MCF 10A (cell line): ENCODE measurements at regions of chr5 and their contacts with region 1.

Region 1: DNA sequence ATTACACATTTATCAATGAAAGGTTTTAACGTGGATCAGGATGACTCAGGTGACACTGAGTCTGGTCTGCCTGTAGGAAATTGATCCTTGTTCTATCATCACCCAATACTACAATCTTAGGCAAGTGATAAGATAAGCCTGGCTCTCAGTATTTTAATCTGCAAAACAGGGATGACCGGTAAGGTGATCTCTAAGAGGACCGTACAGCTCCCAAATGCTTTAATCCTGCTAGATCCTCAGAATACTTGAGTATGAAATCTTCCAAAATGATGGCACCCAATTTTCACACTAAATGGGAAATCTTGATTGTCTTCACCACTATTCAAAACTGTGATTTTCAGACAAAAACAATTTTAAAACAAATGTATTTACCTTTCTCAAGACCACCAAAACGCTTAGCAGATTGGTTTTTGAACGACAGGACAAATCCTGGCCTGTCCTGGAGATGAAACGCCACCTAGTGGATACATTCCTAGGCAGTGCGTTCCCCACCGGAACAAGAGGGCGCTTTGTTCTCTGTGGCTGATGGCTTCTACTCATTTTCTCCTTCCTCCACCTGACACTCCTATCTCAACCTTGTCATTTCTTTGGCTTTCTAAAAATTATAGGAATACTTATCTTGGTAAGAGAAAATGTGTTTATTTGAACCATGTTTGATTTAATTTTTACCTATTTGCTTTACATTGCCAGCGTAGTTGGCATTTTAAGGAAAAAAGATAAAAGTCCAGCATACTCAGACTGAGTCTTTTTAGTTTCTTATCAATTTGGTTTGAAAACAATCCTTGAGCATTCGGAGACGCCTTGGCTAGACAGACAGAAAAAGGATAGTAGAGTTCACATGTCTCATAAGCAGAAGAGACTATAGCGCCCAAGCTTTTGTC is 41.2 kb upstream of the VCAN start:
- DNase-seq: peak; percentile 72
- H3K4me3 Mint-ChIP-seq: no peak overlapping the region
- H3K27ac Mint-ChIP-seq: no peak overlapping the region
- H3K4me1 Mint-ChIP-seq: no peaks in the 10 kb centered on the region
- H3K27me3 Mint-ChIP-seq: no peaks in the 10 kb centered on the region
- CTCF ChIP-seq: peak; percentile 78

Region 2: DNA sequence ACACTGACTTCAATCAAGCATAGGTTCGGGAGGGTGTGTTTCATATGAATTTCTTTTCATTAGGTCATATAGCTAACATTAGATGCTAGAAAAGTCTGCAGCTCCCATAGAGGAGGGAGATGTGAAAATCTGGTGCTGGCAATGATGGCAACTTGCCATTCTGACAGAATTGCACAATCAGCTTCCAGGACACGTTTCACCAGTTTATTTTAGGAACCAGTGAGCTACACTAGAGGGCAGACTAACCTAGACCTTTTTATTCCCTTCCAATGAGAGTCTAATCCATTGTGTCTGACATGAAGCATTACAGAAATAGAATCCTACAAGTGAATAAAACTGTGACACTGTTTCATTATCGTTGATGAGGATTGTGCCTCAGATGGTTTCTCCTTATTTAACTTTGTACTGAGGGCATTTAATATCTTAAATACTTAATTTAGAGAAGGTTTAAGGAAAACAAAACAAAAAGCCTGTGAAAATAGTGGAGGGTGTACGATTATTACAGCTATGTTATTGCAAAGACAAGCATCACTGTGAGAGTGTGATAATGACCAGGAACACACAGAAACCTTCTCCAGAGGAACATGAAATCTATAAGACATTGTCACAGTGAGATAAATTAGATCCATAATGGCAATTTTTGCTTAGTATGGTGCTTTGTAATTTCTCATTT is 788.9 kb before region 1 on chr5:
- CTCF ChIA-PET with region 1: interaction called, 16 read pairs
- POLR2A ChIA-PET with region 1: no interaction called
- intact Hi-C with region 1: loop called (anchors 1 kb)
- DNase-seq: peak; percentile 94
- H3K4me3 Mint-ChIP-seq: no peak overlapping the region
- H3K27ac Mint-ChIP-seq: no peak overlapping the region
- H3K4me1 Mint-ChIP-seq: peaks cover 7% of the 10 kb centered on the region
- H3K27me3 Mint-ChIP-seq: no peaks in the 10 kb centered on the region
- CTCF ChIP-seq: peak; percentile 66

Region 3: DNA sequence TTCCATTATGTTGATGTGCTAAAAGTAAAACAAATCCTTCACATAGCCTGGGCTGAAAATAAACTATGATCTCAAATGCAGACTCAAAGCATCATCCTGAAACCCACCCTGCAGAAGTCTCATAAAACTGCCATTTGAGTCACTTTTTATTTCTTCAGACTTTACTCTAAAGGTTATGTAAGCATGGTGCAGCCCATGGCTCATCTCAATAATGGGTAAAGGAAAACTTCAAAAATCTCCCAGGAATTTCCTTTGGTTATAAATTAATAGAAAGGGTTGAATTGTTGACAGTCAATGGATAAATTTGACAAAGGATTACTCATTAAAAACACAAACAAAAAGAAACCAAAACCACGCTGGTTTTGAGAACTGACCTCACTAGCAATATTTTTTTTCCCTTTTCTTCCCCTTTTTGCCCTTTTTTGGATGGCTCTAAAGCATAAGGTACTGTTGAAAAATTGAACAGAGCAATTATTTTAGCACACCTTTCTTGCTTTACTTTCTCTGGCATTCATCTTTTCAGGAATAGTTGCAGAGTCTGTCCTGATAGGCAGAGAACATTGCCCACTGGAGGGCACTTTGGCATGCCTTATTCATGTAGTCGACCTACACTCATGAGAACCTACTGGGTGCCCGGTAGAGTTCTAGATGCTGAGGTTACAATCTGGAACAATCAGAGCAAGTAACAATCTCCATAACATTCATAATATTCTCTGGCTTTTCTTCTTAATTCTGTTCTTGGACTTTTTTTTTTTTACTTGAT is 544.6 kb before region 1 on chr5:
- CTCF ChIA-PET with region 1: interaction called, 4 read pairs
- POLR2A ChIA-PET with region 1: no interaction called
- intact Hi-C with region 1: loop called (anchors 5 kb)
- DNase-seq: peak; percentile 16
- H3K4me3 Mint-ChIP-seq: no peak overlapping the region
- H3K27ac Mint-ChIP-seq: no peak overlapping the region
- H3K4me1 Mint-ChIP-seq: no peaks in the 10 kb centered on the region
- H3K27me3 Mint-ChIP-seq: no peaks in the 10 kb centered on the region
- CTCF ChIP-seq: no peak

Region 4: GRCh38 chr5:83157163-83157562 is 273.2 kb before region 1 on chr5:
- CTCF ChIA-PET with region 1: no interaction called
- POLR2A ChIA-PET with region 1: no interaction called
- intact Hi-C with region 1: loop called (anchors 5 kb)
- DNase-seq: no peak
- H3K4me3 Mint-ChIP-seq: no peak overlapping the region
- H3K27ac Mint-ChIP-seq: no peak overlapping the region
- H3K4me1 Mint-ChIP-seq: no peaks in the 10 kb centered on the region
- H3K27me3 Mint-ChIP-seq: no peaks in the 10 kb centered on the region
- CTCF ChIP-seq: no peak

Region 5: DNA sequence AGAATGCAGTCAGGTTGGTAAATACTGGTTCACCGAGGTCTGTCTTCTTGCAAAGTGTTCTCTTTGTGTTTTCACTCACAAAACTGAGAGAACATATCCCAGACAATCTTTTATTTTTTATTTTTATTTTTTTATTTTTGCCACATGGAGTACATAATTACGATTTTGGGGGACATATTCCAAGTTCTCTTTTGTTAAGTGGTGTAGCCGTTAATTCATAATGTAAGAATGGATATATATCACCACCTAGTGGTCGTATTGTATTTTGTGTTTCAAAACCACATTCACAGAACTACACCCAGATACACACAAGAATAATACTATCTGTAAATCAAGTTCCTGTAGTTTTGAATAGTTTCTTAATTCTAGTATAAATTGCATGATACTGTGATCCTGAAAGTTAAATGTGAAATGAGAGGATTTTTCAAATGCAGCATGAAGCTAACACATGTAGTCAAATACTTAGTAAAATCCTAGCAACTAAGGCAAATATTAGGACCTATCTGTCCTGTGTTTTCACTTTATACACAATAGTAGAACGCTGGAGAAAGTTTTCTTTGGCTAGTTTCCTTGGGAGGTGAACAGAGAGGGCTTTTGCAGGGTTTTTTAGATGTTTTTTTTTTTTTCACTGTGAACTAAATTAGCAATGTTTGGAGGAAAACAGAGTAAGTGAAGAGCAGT is 133.8 kb after region 1 on chr5:
- CTCF ChIA-PET with region 1: interaction called, 5 read pairs
- POLR2A ChIA-PET with region 1: no interaction called
- intact Hi-C with region 1: loop called (anchors 1 kb)
- DNase-seq: peak; percentile 58
- H3K4me3 Mint-ChIP-seq: no peak overlapping the region
- H3K27ac Mint-ChIP-seq: no peak overlapping the region
- H3K4me1 Mint-ChIP-seq: peaks cover 27% of the 10 kb centered on the region
- H3K27me3 Mint-ChIP-seq: no peaks in the 10 kb centered on the region
- CTCF ChIP-seq: peak; percentile 51

Region 6: DNA sequence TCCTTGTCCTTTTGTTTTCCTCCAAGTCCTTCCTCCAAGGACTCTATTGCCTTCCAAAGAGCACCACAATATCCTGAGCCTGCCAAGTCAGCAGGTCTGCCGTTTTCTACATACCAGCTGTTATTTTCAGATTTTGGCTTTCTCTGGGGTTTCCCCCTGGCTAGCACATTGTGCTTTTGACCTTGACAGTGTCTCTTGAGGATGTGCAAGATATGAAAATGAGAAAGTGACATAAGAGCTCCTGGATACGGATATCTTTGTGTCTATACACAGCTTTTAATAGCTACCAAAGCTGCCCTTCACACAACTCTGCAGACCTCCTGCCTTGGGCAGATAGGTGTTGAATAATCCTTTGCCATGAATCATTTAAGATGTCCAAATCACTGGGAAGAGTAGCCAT is 223.3 kb after region 1 on chr5:
- CTCF ChIA-PET with region 1: no interaction called
- POLR2A ChIA-PET with region 1: no interaction called
- intact Hi-C with region 1: no loop called
- DNase-seq: no peak
- H3K4me3 Mint-ChIP-seq: no peak overlapping the region
- H3K27ac Mint-ChIP-seq: no peak overlapping the region
- H3K4me1 Mint-ChIP-seq: no peaks in the 10 kb centered on the region
- H3K27me3 Mint-ChIP-seq: peaks cover 12% of the 10 kb centered on the region
- CTCF ChIP-seq: no peak